Pancreas (tissue), 10 donors: ENCODE measurements at regions of chr6 and their contacts with region 1.

Region 1: DNA sequence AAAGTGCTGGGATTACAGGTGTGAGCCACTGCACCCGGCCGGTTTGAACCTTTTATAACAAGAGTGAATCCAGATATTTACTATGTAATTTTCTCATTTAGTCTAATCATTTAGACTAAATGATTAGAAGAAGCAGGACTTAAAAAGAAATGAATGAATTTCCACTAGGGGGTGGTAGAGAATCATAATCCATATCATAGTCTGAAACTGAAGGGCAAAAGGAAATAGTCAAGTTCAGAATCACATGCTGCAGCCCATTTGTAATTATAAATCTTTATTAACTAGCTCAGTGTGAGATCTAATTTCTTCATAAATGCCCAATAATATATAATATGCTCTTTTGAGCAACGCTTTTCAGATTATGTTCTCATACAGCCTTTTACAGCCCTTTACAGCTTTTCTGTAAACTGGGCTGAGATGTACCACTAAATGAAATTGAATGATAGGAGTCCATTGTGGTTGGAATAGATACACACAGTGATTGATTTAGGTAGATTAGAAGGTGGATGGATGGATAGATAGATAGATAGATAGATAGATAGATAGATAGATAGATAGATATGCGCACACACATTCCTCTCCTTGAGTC is 31.8 kb downstream of the PSMB9 start:
- DNase-seq: no peak
- ATAC-seq: peak; percentile 73 to 91 (median 86)
- H3K4me3 ChIP-seq: no peak overlapping the region
- H3K27ac ChIP-seq: no peak overlapping the region
- H3K4me1 ChIP-seq: peaks cover 0 to 5% (median 0%) of the 10 kb centered on the region in 3 donors
- H3K27me3 ChIP-seq: no peaks in the 10 kb centered on the region
- CTCF ChIP-seq: peak; percentile 12 to 51 (median 33)

Region 2: GRCh38 chr6:32645047-32645703 is 240.6 kb before region 1 on chr6:
- intact Hi-C with region 1: no loop called
- DNase-seq: no peak
- ATAC-seq: no peak
- H3K4me3 ChIP-seq: no peak overlapping the region
- H3K27ac ChIP-seq: no peak overlapping the region
- H3K4me1 ChIP-seq: no peaks in the 10 kb centered on the region
- H3K27me3 ChIP-seq: no peaks in the 10 kb centered on the region
- CTCF ChIP-seq: no peak

Region 3: DNA sequence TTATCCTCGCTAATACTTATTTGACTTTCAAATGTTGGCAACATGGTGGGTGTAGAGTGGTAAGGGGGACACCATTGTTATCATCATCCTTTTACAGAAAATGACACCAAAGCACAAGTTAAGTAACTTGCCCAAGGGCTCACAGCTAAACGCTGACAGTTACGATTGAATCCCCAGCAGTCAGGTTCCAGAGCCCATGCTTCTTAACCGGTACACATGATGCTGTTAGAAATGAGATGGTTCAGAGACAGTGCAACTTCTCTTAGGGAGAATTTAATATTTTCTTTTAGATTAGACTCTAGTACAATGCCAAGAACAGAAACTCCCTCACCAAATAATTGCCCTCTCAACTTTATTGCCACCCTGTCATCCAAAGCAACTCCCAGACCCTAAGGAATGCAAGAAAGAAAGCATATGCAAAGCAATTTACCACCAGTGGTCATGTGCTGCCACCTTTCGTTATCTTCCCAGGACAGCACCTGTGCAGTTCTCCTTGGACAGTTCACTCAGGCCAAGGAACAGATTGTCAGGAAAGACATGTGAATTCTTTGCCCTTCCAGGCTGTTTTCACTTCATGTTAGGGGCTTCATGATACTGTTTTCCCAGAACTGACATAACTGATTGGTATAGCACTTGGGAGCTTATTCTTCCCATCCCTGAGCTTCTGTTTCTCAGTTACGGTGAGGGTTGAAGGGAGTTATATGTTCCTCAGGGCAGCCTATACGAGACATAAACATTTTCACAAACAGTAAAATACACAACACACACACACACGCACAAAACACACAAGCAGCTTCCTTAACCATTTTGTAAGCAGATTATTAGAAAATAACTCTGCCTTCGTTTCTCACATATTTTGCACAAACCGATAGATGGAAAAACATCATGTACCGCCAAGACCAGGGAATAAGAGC is 62.0 kb after region 1 on chr6:
- intact Hi-C with region 1: loop called in 2 of 3 experiments (anchors 5 kb)
- DNase-seq: peak in 3 of 6 donors; percentile 42 to 51 (median 44)
- ATAC-seq: peak; percentile 68 to 91 (median 78)
- H3K4me3 ChIP-seq: no peak overlapping the region
- H3K27ac ChIP-seq: no peak overlapping the region
- H3K4me1 ChIP-seq: no peaks in the 10 kb centered on the region
- H3K27me3 ChIP-seq: no peaks in the 10 kb centered on the region
- CTCF ChIP-seq: peak; percentile 18 to 66 (median 44)

Region 4: GRCh38 chr6:32974541-32975308 is 88.9 kb after region 1 on chr6:
- intact Hi-C with region 1: loop called in 1 of 3 experiments (anchors 5 kb)
- DNase-seq: peak in 1 of 6 donors; percentile 57
- ATAC-seq: no peak
- H3K4me3 ChIP-seq: peak overlapping the region; percentile 87 to 98 (median 95)
- H3K27ac ChIP-seq: no peak overlapping the region
- H3K4me1 ChIP-seq: peaks cover 7 to 35% (median 13%) of the 10 kb centered on the region in 3 donors
- H3K27me3 ChIP-seq: no peaks in the 10 kb centered on the region
- CTCF ChIP-seq: no peak

Region 5: GRCh38 chr6:32984605-32985389 is 99.0 kb after region 1 on chr6:
- intact Hi-C with region 1: loop called in 1 of 3 experiments (anchors 5 kb)
- DNase-seq: peak; percentile 92 to 95 (median 94)
- ATAC-seq: peak; percentile 82 to 95 (median 91)
- H3K4me3 ChIP-seq: no peak overlapping the region
- H3K27ac ChIP-seq: peak overlapping the region in 2 of 4 donors; percentile 38 to 48
- H3K4me1 ChIP-seq: peaks cover 15 to 27% (median 23%) of the 10 kb centered on the region in 3 donors
- H3K27me3 ChIP-seq: no peaks in the 10 kb centered on the region
- CTCF ChIP-seq: peak; percentile 62 to 83 (median 76)